CD4-positive, alpha-beta T cell (primary cell): ENCODE measurements at regions of chr16 and their contacts with region 1.

Region 1: DNA sequence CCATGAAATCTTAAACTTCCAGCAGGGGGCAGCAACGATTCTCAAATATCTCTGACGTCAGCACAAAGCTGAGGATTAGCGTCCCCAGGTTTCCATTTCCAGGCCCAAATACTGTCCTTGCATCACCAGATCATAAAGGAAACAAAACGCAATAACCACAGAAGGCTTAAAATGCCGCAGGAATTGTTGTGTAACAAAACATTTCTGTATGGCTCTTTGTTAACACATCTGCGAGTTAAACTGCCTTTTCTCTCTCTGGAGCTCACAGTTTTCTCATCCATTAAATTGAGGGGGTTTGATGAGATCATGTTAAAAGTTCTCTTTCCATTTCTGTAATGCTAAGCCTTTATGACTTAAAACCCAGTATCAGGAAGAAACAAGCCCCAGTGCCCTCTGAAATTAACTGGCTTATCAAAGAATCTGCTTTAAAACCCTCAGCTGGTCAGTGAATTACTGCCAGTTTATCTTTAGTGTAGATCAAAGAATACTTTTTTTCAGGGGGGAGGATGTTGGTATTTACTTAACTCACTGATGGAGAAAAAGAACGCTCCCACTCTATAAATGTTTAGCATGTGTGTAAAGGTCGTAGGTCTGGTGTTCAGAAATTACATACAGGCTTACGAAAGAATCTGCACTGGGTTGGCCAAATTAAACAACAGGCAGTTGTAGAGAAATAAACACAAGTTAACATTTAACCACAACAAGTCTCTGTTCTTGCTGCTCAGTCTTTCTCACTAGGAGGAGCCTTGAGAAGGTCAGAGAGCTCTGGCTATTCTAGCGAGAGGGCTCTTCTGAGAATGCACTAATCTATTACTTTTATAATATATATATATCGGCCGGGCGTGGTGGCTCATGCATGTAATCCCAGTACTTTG is 10.6 kb upstream of the TERF2 start:
- DNase-seq: peak; percentile 36 to 88 (median 59)
- ATAC-seq: peak; percentile 80
- H3K4me3 ChIP-seq: no peak overlapping the region
- H3K4me3 Mint-ChIP-seq: no peak overlapping the region
- H3K27ac ChIP-seq: peak overlapping the region in 1 of 2 donors; percentile 15
- H3K27ac Mint-ChIP-seq: peak overlapping the region; percentile 8
- H3K4me1 ChIP-seq: peaks cover 3% of the 10 kb centered on the region
- H3K4me1 Mint-ChIP-seq: peaks cover 6% of the 10 kb centered on the region
- H3K27me3 ChIP-seq: no peaks in the 10 kb centered on the region
- H3K27me3 Mint-ChIP-seq: no peaks in the 10 kb centered on the region
- CTCF ChIP-seq: peak; percentile 44

Region 2: GRCh38 chr16:69236319-69236718 is 160.1 kb before region 1 on chr16:
- CTCF ChIA-PET with region 1: no interaction called
- POLR2A ChIA-PET with region 1: no interaction called
- intact Hi-C with region 1: no loop called
- DNase-seq: no peak
- ATAC-seq: no peak
- H3K4me3 ChIP-seq: no peak overlapping the region
- H3K4me3 Mint-ChIP-seq: no peak overlapping the region
- H3K27ac ChIP-seq: no peak overlapping the region
- H3K27ac Mint-ChIP-seq: no peak overlapping the region
- H3K4me1 ChIP-seq: no peaks in the 10 kb centered on the region
- H3K4me1 Mint-ChIP-seq: peaks cover 4% of the 10 kb centered on the region
- H3K27me3 ChIP-seq: no peaks in the 10 kb centered on the region
- H3K27me3 Mint-ChIP-seq: no peaks in the 10 kb centered on the region
- CTCF ChIP-seq: no peak

Region 3: DNA sequence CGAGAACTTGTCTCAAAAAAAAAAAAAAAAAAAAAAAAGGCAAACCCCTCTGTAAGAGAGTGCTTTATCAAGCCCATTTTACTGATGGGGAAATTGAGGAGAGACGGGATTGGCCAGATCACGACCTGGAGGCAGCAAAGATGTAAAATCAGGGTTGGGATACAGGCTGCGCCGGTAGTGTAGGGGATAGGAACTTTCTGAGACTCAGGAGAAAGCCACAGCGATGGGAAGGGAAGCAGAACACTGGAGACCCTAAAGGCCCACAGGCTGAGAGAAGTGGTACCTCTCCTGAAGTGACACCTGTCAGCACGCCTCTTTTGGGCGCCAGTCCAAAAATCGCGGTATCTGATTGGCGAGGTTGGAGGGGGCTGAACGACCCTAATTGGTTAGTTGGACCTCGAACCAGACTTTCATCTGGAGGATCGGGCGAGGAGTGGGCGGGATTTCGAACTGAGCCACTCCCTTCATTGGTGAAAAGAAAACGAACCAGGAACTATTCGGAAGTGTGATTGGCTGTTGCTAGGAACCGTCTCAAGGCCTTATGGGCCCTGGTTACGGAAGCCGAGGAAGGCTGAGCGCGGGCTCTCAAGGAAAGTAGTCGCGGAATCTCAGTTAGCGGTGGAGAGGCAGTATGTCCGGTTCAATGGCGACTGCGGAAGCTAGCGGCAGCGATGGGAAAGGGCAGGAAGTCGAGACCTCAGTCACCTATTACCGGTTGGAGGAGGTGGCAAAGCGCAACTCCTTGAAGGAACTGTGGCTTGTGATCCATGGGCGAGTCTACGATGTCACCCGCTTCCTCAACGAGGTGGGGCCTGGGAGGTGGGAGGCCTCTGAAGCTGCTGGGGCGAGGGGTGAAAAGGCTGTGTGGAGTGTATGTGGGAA is 27.9 kb after region 1 on chr16 and contains the start of gene CYB5B:
- CTCF ChIA-PET with region 1: interaction called, 8 read pairs
- POLR2A ChIA-PET with region 1: interaction called, 4 read pairs
- intact Hi-C with region 1: loop called in 1 of 2 experiments (anchors 1 kb)
- DNase-seq: peak; percentile 90 to 99 (median 96)
- ATAC-seq: peak; percentile 90
- H3K4me3 ChIP-seq: peak within 1 kb of the TSS; percentile 96
- H3K4me3 Mint-ChIP-seq: peak within 1 kb of the TSS; percentile 92
- H3K27ac ChIP-seq: peak within 1 kb of the TSS; percentile 58 to 84
- H3K27ac Mint-ChIP-seq: peak within 1 kb of the TSS; percentile 86
- H3K4me1 ChIP-seq: peaks cover 20% of the 10 kb centered on the region
- H3K4me1 Mint-ChIP-seq: peaks cover 36% of the 10 kb centered on the region
- H3K27me3 ChIP-seq: no peaks in the 10 kb centered on the region
- H3K27me3 Mint-ChIP-seq: no peaks in the 10 kb centered on the region
- CTCF ChIP-seq: no peak
- total RNA-seq, gene CYB5B: 16.0 to 18.3 TPM

Region 4: DNA sequence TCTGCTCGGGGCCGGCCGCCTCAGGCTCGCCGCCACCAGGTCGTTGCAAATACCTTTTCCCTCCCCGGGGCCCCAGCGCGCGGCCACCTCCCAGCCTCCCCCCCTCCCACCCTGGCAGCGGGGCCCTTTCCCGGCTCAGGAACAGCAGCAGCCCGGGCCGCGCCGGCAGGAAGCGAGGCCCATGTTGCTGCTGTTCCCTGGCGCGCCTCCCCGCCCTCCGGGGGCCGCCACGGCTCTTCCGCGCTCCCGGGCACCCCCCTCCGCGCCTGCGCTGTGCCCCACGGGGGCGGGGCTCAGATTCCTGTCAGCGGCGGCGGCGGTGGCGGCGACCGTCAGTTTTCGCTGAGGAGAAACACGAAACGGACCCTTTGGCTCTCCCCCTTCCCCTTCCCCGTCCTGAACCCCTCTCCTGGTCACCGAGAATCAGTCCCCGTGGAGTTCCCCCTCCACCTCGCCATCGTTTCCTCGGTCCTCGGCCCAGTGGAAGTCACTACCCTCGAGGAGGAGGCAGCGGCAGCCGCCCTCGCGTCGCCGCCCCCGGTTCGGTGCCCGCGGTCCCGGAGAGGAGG is 169.3 kb after region 1 on chr16 and contains the start of gene NFAT5:
- CTCF ChIA-PET with region 1: interaction called, 5 read pairs
- POLR2A ChIA-PET with region 1: no interaction called
- intact Hi-C with region 1: loop called (anchors 1 to 2 kb)
- DNase-seq: peak; percentile 71 to 95 (median 88)
- ATAC-seq: peak; percentile 80
- H3K4me3 ChIP-seq: peak within 1 kb of the TSS; percentile 84
- H3K4me3 Mint-ChIP-seq: peak within 1 kb of the TSS; percentile 100
- H3K27ac ChIP-seq: peak within 1 kb of the TSS; percentile 75 to 93
- H3K27ac Mint-ChIP-seq: peak within 1 kb of the TSS; percentile 96
- H3K4me1 ChIP-seq: peaks cover 31% of the 10 kb centered on the region
- H3K4me1 Mint-ChIP-seq: peaks cover 47% of the 10 kb centered on the region
- H3K27me3 ChIP-seq: no peaks in the 10 kb centered on the region
- H3K27me3 Mint-ChIP-seq: no peaks in the 10 kb centered on the region
- CTCF ChIP-seq: no peak
- total RNA-seq, gene NFAT5: 19.5 to 21.2 TPM

Region 5: GRCh38 chr16:69651217-69651616 is 254.8 kb after region 1 on chr16:
- CTCF ChIA-PET with region 1: no interaction called
- POLR2A ChIA-PET with region 1: no interaction called
- intact Hi-C with region 1: loop called (anchors 10 kb)
- DNase-seq: no peak
- ATAC-seq: no peak
- H3K4me3 ChIP-seq: no peak overlapping the region
- H3K4me3 Mint-ChIP-seq: no peak overlapping the region
- H3K27ac ChIP-seq: no peak overlapping the region
- H3K27ac Mint-ChIP-seq: peak overlapping the region; percentile 21
- H3K4me1 ChIP-seq: no peaks in the 10 kb centered on the region
- H3K4me1 Mint-ChIP-seq: no peaks in the 10 kb centered on the region
- H3K27me3 ChIP-seq: no peaks in the 10 kb centered on the region
- H3K27me3 Mint-ChIP-seq: no peaks in the 10 kb centered on the region
- CTCF ChIP-seq: no peak

Region 6: DNA sequence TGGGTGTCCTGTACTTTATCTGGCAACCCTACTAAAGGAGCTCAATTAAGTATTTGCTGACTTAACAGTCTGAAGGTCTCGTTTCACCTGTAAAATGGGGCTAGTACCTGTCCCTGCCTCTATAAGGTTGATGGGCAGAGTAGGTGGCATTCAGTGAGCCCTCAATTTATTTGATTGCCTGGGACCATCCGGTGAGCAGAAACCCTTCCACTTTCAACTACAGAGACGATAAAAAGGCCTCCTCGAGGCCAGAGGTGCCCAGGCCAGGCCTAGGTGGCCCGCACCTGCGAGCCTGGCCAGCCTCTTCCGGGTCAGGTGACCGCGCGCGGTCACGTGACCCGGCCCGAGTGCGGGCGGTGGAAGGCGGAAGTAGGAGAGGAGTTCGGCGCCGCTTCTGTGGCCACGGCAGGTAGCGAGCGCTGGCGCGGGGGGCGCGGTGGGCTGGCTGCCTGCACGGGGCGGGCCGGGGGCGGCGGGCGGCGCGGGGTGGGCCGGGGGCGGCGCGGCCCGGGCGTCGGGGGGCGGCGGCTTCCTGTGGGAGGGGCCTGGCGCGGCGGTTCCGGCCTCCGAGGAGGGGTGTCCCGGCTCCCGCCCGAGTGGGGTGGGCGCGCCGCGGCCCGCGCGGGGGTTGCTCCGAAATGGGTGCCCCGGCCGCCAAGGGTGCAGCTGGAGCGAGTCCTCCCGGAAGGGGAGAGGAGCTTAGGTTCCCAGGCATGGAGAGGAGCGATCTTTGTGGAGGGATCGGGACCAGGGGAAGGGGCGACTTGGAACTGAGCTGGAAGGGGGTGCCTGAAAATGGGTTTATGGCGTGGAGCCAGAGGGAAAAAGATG is 365.8 kb after region 1 on chr16 and contains the start of gene WWP2:
- CTCF ChIA-PET with region 1: no interaction called
- POLR2A ChIA-PET with region 1: interaction called, 3 read pairs
- intact Hi-C with region 1: loop called in 1 of 2 experiments (anchors 2 kb)
- DNase-seq: peak; percentile 55 to 93 (median 74)
- ATAC-seq: peak; percentile 72
- H3K4me3 ChIP-seq: peak within 1 kb of the TSS; percentile 98
- H3K4me3 Mint-ChIP-seq: peak within 1 kb of the TSS; percentile 93
- H3K27ac ChIP-seq: peak within 1 kb of the TSS; percentile 89 to 92
- H3K27ac Mint-ChIP-seq: peak within 1 kb of the TSS; percentile 98
- H3K4me1 ChIP-seq: peaks cover 20% of the 10 kb centered on the region
- H3K4me1 Mint-ChIP-seq: peaks cover 34% of the 10 kb centered on the region
- H3K27me3 ChIP-seq: no peaks in the 10 kb centered on the region
- H3K27me3 Mint-ChIP-seq: no peaks in the 10 kb centered on the region
- CTCF ChIP-seq: no peak
- total RNA-seq, gene WWP2: 41.9 to 43.0 TPM

Region 7: DNA sequence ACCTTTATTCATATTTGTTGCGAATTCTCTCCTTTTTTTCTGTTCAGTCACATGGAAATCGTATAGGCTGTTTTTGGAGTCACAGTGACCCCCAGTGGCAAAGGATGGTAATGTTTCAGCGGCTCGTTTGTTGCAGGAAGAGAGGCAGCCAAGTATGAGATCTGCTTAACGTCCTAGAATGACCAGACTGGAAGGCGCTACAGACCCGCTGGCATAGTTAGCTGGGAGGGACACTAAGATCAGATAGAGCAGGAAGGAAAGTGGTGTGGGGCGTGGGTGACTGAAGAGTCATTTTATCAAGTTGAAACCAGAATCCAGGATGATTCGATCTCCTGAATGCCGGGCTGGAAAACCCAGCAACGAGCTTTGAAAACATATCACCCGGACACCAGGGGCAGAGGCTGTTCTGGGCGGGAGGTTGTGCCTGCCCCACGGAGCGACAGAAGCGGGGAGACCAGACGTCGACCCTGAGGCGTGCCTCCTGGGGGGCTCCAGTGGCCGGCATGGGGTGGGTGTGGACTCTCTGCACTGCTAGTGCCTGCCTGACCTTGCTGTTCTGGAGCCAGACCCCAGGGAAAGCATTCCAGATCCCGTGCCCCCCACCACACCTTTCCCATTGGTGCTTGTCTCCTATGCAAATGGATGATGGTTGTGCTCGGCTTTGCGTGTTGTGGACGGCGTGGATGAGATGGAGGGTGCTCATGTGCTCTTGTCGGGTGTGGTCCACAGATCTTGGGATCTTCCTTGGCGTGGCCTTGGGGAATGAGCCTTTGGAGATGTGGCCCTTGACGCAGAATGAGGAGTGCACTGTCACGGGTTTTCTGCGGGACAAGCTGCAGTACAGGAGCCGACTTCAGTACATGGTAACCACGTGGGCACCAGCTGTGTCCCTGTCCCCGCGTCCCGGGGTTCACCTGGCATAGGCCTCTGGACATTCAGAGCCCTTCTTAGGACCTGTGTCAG is 1257.7 kb after region 1 on chr16:
- CTCF ChIA-PET with region 1: no interaction called
- POLR2A ChIA-PET with region 1: no interaction called
- intact Hi-C with region 1: loop called in 1 of 2 experiments (anchors 10 kb)
- DNase-seq: peak; percentile 60 to 86 (median 78)
- ATAC-seq: peak; percentile 92
- H3K4me3 ChIP-seq: no peak overlapping the region
- H3K4me3 Mint-ChIP-seq: no peak overlapping the region
- H3K27ac ChIP-seq: no peak overlapping the region
- H3K27ac Mint-ChIP-seq: no peak overlapping the region
- H3K4me1 ChIP-seq: peaks cover 4% of the 10 kb centered on the region
- H3K4me1 Mint-ChIP-seq: peaks cover 4% of the 10 kb centered on the region
- H3K27me3 ChIP-seq: no peaks in the 10 kb centered on the region
- H3K27me3 Mint-ChIP-seq: no peaks in the 10 kb centered on the region
- CTCF ChIP-seq: peak; percentile 88